A673 (cell line): ENCODE measurements at regions of chr18 and their contacts with region 1.

Region 1: DNA sequence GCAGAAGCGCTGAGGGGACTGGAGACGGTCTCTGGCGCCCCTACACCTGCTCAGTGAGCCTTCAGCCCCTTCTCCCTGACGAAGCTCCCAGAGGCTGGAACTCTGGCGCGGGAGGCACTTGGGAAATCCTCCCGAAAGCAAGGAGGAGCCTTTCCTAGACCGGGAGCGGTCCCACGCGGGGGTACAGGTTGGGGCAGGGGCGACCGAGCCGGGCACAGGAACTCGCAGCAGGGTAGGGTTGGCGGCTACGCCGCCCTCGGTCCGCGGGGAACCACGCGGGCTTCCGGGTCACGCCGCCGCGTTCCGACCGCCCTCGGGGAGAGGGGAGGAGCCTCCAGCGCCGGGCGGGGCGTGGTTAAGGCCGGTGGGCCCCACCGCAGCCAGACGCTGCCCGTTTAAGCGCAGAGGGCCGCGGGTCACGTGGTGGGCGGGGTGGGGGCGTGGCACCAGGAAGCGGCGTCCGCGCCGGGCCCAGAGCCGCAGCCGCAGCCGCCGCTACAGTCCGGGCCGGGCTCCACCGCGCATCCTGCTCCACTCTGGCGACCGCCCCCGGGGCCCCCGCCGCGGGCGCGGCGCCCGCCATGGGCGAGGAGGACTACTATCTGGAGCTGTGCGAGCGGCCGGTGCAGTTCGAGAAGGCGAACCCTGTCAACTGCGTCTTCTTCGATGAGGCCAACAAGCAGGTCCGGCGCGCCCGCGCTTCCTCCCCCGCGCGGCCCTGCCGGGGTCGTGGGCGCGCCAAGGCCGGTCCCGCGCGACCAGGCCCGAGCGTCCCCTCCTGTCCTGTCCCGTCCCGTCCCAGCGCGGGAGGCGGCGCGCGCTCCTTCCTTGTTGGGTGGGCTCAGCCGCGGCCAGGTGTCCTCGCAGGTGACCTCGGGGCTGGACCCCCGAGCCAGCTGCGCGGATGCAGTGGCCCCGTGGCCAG is at the start of gene RMC1:
- DNase-seq: peak; percentile 95
- H3K4me3 ChIP-seq: peak within 1 kb of the TSS; percentile 76
- H3K27ac ChIP-seq: peak within 1 kb of the TSS; percentile 87
- H3K4me1 ChIP-seq: peaks cover 10% of the 10 kb centered on the region
- H3K27me3 ChIP-seq: no peaks in the 10 kb centered on the region
- CTCF ChIP-seq: 0 out of 2 replicates have a peak, but pooled peaks have one; percentile 18
- total RNA-seq, gene RMC1: 38.1 and 39.8 TPM in 2 replicates

Region 2: DNA sequence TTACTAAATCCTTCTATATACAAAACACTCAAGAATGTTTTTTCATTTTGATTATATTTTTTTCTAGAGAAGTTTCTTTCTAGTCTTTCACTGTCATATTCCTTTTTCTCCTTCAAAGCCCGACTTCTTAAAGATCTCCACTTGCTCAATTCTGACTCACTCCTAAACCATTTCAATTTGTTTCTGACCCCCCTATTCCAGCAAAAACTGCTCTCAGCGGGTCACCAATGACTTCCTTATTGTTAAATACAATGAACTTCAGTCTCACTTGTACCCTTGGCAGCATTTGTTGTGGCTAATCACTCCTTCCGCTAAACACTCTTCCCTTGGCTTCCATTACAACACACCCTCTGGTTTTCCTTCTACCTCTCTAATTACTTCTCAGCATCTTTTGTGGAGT is 681.3 kb before region 1 on chr18:
- CTCF ChIA-PET with region 1: no interaction called
- POLR2A ChIA-PET with region 1: no interaction called
- intact Hi-C with region 1: loop called (anchors 10 kb)
- DNase-seq: peak; percentile 97
- H3K4me3 ChIP-seq: peak overlapping the region; percentile 10
- H3K27ac ChIP-seq: peak overlapping the region; percentile 28
- H3K4me1 ChIP-seq: peaks cover 20% of the 10 kb centered on the region
- H3K27me3 ChIP-seq: no peaks in the 10 kb centered on the region
- CTCF ChIP-seq: no peak

Region 3: DNA sequence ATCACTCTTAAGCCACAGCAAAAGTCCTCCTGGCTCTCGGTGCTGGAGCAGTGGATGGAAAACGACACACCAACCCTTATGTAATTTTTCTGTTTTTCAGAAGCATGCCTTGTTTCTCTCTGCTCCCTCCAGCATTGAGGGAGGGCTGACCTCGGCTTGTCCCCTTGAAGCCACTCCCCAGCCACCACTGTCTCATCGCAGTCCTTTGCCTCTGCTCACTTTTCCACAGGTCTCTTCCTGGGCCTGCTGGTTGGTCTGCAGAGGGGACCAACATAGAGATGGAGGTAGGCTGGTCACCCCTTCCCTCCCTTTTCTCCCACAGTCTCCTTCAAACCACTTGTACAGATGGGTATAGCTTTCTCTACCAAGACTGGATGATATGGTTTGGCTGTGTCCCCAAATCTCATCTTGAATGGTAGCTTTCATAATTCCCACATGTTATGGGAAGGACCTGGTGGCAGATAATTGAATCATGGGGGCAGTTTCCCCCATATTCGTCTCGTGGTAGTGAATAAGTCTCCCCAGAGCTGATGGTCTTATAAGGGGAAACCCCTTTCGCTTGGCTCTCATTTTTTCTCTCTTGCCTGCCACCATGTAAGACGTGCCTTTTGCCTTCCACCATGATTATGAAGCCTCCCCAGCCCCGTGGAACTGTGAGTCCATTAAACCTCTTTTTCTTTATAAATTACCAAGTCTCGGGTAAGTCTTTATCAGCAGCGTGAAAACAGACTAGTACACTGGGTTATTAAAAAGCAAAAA is 64.5 kb before region 1 on chr18:
- CTCF ChIA-PET with region 1: no interaction called
- POLR2A ChIA-PET with region 1: no interaction called
- intact Hi-C with region 1: no loop called
- DNase-seq: no peak
- H3K4me3 ChIP-seq: no peak overlapping the region
- H3K27ac ChIP-seq: no peak overlapping the region
- H3K4me1 ChIP-seq: peaks cover 6% of the 10 kb centered on the region
- H3K27me3 ChIP-seq: no peaks in the 10 kb centered on the region
- CTCF ChIP-seq: no peak

Region 4: GRCh38 chr18:23924813-23925212 is 421.5 kb after region 1 on chr18:
- CTCF ChIA-PET with region 1: no interaction called
- POLR2A ChIA-PET with region 1: no interaction called
- intact Hi-C with region 1: loop called (anchors 5 kb)
- DNase-seq: peak; percentile 22
- H3K4me3 ChIP-seq: no peak overlapping the region
- H3K27ac ChIP-seq: no peak overlapping the region
- H3K4me1 ChIP-seq: peaks cover 4% of the 10 kb centered on the region
- H3K27me3 ChIP-seq: no peaks in the 10 kb centered on the region
- CTCF ChIP-seq: no peak

Region 5: GRCh38 chr18:24138789-24139616 is 635.7 kb after region 1 on chr18 and contains the start of gene CABYR:
- CTCF ChIA-PET with region 1: no interaction called
- POLR2A ChIA-PET with region 1: no interaction called
- intact Hi-C with region 1: loop called (anchors 10 kb)
- DNase-seq: peak; percentile 93
- H3K4me3 ChIP-seq: peak within 1 kb of the TSS; percentile 57
- H3K27ac ChIP-seq: peak within 1 kb of the TSS; percentile 63
- H3K4me1 ChIP-seq: peaks cover 8% of the 10 kb centered on the region
- H3K27me3 ChIP-seq: no peaks in the 10 kb centered on the region
- CTCF ChIP-seq: no peak
- total RNA-seq, gene CABYR: 7.9 and 11.5 TPM in 2 replicates